Dendritic cell treated with granulocyte-macrophage colony-stimulating factor and Interleukin-4, amounts not matched to agents 40 ng/mL and 50 ng/mL, for 4 days (primary cell): ENCODE measurements at regions of chr6 and their contacts with region 1.

Region 1: DNA sequence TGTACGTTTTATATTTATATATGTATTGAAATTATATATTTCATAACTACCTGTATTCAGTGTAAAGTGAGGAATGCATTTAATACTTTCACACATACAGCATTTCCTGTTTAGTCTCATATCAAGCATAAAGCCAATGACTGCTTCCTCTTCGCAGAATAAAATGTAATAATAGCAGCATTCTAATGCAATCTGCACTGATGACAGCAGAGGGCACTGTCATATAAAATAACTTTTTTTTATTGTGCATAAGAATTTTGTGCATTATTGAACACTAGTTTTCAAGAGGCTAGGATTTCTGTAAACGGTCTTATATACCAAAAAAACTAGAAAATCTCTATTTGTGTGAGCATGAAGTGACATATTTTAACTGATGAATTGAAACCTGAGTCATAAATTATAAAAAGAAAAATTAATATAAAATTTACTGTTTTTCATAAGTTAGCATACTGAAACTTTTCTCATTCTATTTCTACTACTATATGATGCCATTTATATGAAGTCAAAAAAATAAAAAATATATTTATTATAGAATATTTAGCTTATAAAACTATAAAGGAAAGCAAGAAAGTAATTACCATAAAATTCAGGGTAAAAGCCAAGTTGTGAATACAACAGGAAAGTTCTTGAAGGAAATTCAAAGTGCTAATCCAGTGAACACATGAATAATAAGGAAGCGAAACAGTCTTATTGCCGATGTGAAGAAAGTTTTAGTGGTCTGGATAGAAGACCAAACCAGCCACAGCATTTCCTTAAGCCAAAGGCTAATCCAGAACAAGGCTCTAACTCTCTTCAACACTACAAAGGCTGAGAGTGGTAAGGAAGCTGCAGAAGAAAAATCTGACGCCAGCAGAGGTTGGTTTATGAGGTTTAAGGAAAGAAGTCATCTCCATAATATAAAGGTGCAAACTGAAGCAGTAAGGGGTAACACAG is 36.3 kb downstream of the RNF146 start:
- H3K4me3 Mint-ChIP-seq: no peak overlapping the region
- H3K27ac Mint-ChIP-seq: no peak overlapping the region
- H3K4me1 Mint-ChIP-seq: peaks cover 17% of the 10 kb centered on the region
- H3K27me3 Mint-ChIP-seq: no peaks in the 10 kb centered on the region

Region 2: DNA sequence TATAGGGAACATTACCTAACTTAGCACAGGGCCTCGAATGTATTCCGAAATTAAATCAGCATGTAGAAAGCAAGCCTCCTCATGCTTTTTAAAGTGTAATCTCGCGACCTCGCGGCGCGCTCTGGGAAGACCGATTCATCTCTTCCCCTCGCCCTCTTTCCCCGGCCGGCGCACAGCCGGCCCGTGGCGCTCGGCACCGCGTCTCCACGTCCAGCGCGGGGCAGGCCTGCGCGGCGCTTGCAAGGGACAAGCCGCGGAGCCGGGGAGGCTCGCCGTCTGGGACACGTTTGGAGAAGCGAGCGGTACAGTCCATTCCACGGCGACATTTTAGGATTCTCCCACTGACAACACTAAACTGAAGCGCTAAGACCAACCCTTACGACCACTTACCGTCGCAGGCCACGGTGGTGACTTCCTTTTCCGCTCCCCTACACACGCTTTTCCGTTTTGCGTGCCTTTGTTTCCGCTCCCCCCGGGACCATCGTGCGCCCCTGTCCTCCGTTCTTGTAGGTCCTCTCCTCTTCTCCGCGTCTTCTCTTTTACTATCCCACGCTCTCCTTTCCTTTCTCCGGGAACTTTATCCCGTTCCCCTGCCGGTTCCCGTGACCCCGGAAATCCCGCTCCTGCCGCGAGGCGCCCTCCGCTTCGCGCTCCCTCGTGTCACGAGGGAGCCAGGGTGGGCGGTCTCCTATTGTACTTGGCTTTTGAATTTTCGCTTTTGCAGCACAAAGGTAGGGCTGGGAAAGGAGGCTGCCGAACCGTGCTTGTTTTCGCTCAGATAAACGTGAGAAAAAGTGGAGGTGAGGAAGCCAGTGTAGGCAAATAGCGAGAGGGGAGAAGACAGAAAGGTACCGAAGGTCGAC is 40.2 kb after region 1 on chr6 and contains the start of gene ECHDC1:
- intact Hi-C with region 1: loop called (anchors 5 kb)
- H3K4me3 Mint-ChIP-seq: no peak within 1 kb of the TSS
- H3K27ac Mint-ChIP-seq: no peak within 1 kb of the TSS
- H3K4me1 Mint-ChIP-seq: peaks cover 17% of the 10 kb centered on the region
- H3K27me3 Mint-ChIP-seq: no peaks in the 10 kb centered on the region

Region 3: GRCh38 chr6:127365874-127366273 is 62.9 kb after region 1 on chr6:
- intact Hi-C with region 1: no loop called
- H3K4me3 Mint-ChIP-seq: no peak overlapping the region
- H3K27ac Mint-ChIP-seq: no peak overlapping the region
- H3K4me1 Mint-ChIP-seq: peaks cover 6% of the 10 kb centered on the region
- H3K27me3 Mint-ChIP-seq: no peaks in the 10 kb centered on the region

Region 4: GRCh38 chr6:127420556-127420955 is 117.6 kb after region 1 on chr6:
- intact Hi-C with region 1: loop called (anchors 1 kb)
- H3K4me3 Mint-ChIP-seq: no peak overlapping the region
- H3K27ac Mint-ChIP-seq: no peak overlapping the region
- H3K4me1 Mint-ChIP-seq: peaks cover 12% of the 10 kb centered on the region
- H3K27me3 Mint-ChIP-seq: no peaks in the 10 kb centered on the region

Region 5: GRCh38 chr6:127464881-127465459 is 162.0 kb after region 1 on chr6:
- intact Hi-C with region 1: loop called (anchors 2 kb)
- H3K4me3 Mint-ChIP-seq: no peak overlapping the region
- H3K27ac Mint-ChIP-seq: no peak overlapping the region
- H3K4me1 Mint-ChIP-seq: no peaks in the 10 kb centered on the region
- H3K27me3 Mint-ChIP-seq: no peaks in the 10 kb centered on the region

Region 6: GRCh38 chr6:127539272-127539671 is 236.3 kb after region 1 on chr6:
- intact Hi-C with region 1: loop called (anchors 1 kb)
- H3K4me3 Mint-ChIP-seq: no peak overlapping the region
- H3K27ac Mint-ChIP-seq: no peak overlapping the region
- H3K4me1 Mint-ChIP-seq: peaks cover 7% of the 10 kb centered on the region
- H3K27me3 Mint-ChIP-seq: peaks cover 11% of the 10 kb centered on the region